Cardiac septum (tissue), 1 donor: ENCODE measurements at regions of chr3 and their contacts with region 1.

Region 1: DNA sequence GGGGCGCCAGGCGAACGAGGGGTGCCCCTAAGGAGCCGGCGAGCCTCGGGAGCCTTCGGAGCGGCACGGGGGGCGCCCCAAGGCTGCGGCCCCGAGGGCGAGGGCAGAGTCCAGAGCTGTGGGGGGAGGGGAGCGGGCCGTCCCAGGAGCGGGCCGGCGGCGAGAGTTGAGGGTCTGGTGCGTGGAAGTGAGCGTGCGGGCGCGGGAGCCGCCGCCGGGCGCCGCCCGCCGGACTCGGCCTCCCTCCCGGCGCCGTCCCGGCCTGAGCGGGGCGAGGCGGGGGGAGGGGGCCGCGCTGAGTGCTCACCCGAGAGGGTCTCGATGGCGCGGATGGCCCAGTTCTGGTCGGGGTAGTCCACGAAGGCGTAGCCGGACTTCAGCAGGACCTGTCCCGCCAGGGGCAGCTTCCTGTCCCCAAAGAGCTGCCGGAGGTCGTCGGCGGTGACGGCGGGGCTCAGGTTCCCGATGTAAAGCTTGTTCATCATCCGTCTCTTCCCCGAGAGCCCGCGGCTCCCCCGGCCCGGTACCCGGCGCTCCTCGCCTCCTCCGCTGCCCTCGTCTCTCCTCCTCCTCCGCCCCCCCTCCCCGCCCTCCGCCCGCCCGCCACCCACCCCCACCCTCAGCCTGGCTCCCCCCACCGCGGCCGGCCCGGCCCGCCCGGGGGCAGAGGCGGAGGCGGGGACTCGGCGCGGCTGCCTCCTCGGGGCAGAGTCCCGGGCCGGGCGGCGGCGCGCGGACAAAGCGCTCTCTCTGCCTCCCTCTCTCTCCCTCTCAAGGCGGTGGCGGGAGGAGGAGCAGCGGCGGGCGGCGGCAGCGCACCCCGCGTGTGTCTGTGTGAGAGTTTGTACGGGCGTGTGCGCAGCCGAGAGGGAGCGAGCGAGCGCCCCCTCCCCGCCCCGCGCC is at the start of gene IGF2BP2:
- DNase-seq: peak; percentile 83
- total RNA-seq, gene IGF2BP2: 18.5 TPM

Region 2: GRCh38 chr3:185733980-185734724 is 90.6 kb before region 1 on chr3:
- intact Hi-C with region 1: no loop called
- DNase-seq: no peak

Region 3: GRCh38 chr3:185764163-185764979 is 60.4 kb before region 1 on chr3:
- intact Hi-C with region 1: loop called (anchors 5 kb)
- DNase-seq: no peak

Region 4: GRCh38 chr3:185937689-185938463 is 113.1 kb after region 1 on chr3 and contains the start of gene TRA2B:
- intact Hi-C with region 1: loop called (anchors 2 kb)
- DNase-seq: peak; percentile 100
- total RNA-seq, gene TRA2B: 62.1 TPM